Ascending aorta (tissue), 2 donors: ENCODE measurements at regions of chr1 and their contacts with region 1.

Region 1: DNA sequence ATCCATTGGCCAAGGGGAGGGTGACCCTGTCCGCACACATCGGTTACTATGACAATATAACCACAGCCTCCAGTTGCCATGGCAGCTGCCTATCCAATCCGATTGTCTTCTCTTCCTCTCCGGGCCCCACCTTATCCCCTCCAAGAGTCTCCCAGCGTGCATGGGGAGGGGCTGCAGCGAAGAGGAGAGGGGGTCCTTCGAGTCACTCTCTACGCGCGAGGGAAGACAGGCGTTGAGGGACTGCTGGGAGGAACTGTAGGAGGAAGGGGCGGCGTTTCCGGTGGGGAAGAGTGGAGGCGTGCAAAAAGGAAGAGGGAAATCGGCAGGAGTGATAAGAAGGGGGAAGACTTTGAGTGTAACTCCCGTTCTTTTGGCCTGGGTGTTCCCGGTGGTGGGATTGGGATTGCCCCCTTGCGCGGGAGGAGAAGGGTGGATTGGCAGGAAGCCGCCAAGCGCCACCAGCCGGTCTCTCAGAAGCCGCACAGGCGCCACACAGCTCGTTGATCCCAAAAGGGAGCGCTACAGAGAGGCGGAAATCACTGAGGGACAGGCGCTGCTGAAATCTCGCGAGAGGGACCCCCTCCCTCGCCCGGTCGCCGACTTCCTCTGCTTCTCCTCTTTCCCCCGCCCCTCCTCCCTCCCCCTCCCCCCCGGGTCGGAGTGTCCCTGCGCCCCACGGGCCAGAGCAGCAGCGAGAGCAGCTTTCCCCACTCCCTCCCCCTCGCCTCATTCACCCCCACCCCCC is 384 bp upstream of the SMG7 start:
- DNase-seq: peak; percentile 93 to 99
- H3K4me3 ChIP-seq: peak overlapping the region; percentile 64 to 95
- H3K27ac ChIP-seq: peak overlapping the region; percentile 88 to 89
- H3K4me1 ChIP-seq: peaks cover 5 to 12% of the 10 kb centered on the region in 2 donors
- H3K27me3 ChIP-seq: no peaks in the 10 kb centered on the region
- CTCF ChIP-seq: no peak

Region 2: DNA sequence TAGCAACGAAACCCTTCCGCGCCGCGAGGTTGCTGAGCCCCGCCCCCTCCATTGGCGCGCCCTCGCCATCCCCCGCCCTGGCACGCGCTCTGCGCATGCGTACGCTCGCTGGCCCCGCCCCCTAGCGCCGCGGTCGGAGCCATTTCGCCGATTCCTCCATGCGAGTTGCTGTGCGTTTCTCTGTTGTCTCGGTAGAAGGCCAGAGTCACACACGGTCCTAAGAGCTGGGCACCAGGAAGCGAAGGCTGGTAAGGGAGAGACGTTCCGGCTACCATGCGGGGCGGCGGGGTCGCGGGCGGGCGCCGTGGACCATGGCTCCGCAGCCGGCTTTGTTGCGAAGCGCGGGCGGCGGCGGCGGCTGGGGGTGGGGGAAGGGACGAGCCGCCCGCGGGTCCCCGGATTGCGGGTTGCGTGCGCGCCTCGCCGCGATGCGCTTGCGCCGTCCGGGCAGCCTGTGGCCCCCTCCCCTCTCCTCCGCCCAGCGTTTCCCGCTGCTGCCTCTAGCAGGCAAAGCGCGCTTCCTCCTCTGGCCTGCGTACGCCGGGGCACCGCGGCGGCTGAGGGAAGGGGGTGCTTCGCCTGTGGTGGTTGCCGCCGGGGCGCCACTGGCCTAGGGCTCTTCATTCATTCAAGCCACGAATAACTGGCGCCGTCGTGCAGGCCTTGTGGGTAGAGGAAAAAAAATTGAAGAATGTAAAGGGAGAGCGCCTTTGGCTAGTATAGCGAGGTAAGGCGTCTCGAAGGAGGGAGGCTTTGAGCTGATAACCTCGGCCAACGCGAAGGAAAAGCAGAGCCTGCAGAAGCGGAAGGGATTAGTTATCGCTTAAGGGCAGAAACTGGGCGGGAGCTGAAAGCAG is 632.5 kb before region 1 on chr1 and contains the start of gene DHX9:
- intact Hi-C with region 1: loop called (anchors 5 kb)
- DNase-seq: peak; percentile 55 to 96
- H3K4me3 ChIP-seq: peak within 1 kb of the TSS; percentile 75 to 95
- H3K27ac ChIP-seq: peak within 1 kb of the TSS; percentile 90 to 91
- H3K4me1 ChIP-seq: peaks cover 0 to 10% of the 10 kb centered on the region in 2 donors
- H3K27me3 ChIP-seq: no peaks in the 10 kb centered on the region
- CTCF ChIP-seq: peak in 1 of 3 experiments; percentile 20
- total RNA-seq, gene DHX9: 52.8 TPM

Region 3: GRCh38 chr1:183270541-183271141 is 201.3 kb before region 1 on chr1:
- intact Hi-C with region 1: no loop called
- DNase-seq: no peak
- H3K4me3 ChIP-seq: no peak overlapping the region
- H3K27ac ChIP-seq: peak overlapping the region; percentile 27 to 48
- H3K4me1 ChIP-seq: peaks cover 0 to 6% of the 10 kb centered on the region in 2 donors
- H3K27me3 ChIP-seq: no peaks in the 10 kb centered on the region
- CTCF ChIP-seq: no peak

Region 4: DNA sequence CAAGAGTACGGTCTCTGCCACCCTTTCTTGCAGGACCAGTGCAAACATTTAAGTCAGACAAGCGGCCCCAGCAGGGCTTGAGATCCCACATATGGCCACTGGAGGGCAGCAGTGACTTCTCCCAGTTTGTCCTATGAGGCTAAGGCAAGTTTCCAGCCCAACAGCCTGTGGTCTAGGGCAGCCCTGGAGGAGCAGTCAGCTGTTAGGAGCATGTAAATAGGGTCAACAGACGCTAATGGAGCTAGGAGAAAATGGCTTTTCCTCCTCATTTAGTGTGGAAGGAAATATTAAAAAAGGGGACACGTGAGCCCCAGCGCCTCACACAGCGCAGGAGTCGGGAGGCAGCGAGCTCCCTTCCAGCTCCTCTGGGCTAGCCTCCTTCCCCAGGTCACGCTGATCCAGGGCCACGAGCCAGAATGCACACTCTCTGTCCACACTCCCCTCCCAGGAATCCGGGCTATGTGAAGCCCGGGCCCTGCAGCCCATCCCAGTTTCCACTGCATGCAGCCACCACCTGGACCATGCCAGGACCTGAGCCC is 190.3 kb before region 1 on chr1:
- intact Hi-C with region 1: loop called (anchors 5 kb)
- DNase-seq: peak; percentile 69 to 97
- H3K4me3 ChIP-seq: no peak overlapping the region
- H3K27ac ChIP-seq: peak overlapping the region; percentile 58 to 70
- H3K4me1 ChIP-seq: peaks cover 2 to 14% of the 10 kb centered on the region in 2 donors
- H3K27me3 ChIP-seq: no peaks in the 10 kb centered on the region
- CTCF ChIP-seq: peak; percentile 91 to 96 (median 91)

Region 5: DNA sequence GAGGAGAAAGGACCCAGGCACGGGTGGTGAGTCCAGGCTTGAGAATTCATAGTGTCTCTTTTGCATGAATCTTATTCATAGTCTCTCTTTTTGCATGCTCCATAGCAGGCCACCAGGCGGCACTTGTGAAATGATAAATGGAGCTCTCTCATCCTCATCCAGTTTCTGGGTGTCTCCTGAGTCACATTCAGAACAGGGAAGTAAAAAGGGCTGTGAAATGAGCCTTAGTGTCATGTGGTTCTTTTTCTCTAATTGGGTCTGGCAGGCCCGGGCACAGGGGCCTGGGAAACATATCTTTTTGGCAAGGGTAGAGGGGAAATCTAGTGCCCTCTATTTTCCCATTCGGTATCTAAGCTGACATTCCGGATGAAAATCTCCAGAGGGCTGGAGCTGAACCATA is 137.4 kb after region 1 on chr1:
- intact Hi-C with region 1: loop called (anchors 2 kb)
- DNase-seq: peak in 1 of 2 donors; percentile 86
- H3K4me3 ChIP-seq: peak overlapping the region in 1 of 2 donors; percentile 21
- H3K27ac ChIP-seq: peak overlapping the region; percentile 68 to 84
- H3K4me1 ChIP-seq: peaks cover 0 to 16% of the 10 kb centered on the region in 2 donors
- H3K27me3 ChIP-seq: no peaks in the 10 kb centered on the region
- CTCF ChIP-seq: peak; percentile 51 to 64 (median 58)

Region 6: DNA sequence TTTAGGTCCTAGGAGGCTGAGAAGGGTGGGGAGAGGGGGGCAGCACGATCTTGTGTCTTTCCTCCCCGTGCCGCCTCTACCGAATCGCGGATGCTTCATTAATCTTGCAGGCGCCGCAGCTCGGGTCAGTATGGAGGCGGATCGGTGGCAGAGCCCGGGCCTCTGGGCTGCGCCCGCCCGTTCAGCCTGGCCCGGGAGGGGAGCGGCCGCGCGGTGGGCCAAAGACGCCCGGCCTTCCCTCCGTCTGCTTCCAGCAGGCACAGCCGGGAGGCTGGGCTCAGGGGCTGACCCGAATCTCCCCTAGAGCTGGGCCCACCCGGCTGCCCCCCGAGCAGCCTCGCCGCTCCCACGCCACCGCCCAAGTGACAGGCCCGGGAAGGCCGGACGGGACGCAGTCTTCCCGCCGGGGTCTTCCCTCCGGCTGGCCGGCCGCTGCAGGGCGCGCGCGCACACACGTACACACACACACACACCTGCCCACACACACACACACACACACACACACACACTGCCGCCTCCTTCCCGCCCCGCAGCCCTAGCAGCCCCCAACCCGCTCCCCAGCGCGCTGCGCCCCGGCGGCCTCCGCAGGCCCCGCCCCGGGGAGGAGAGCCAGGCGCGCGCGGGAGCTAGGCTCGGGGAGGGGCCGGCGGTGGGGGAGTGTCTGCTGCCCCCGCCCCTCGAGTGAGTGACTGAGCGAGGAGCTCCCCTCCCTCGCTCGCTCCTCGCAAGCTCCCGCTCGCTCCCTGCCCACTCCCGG is 914.6 kb after region 1 on chr1 and contains the start of gene C1orf21:
- intact Hi-C with region 1: loop called (anchors 5 kb)
- DNase-seq: peak; percentile 54 to 93
- H3K4me3 ChIP-seq: peak within 1 kb of the TSS; percentile 87 to 98
- H3K27ac ChIP-seq: peak within 1 kb of the TSS; percentile 73 to 75
- H3K4me1 ChIP-seq: peaks cover 0 to 5% of the 10 kb centered on the region in 2 donors
- H3K27me3 ChIP-seq: no peaks in the 10 kb centered on the region
- CTCF ChIP-seq: no peak
- total RNA-seq, gene C1orf21: 21.8 TPM